HepG2 (cell line): ENCODE measurements at regions of chr1 and their contacts with region 1.

Region 1: GRCh38 chr1:163535807-163536206 is 214.1 kb downstream of the NUF2 start:
- DNase-seq: no peak
- ATAC-seq: no peak
- H3K4me3 ChIP-seq: no peak overlapping the region
- H3K27ac ChIP-seq: no peak overlapping the region
- H3K4me1 ChIP-seq: 0 out of 2 replicates have a peak, but pooled peaks cover 5% of the 10 kb centered on the region
- H3K27me3 ChIP-seq: no peaks in the 10 kb centered on the region
- CTCF ChIP-seq: 0 out of 2 replicates have a peak, but pooled peaks have one; percentile 17
- EP300 ChIP-seq: no peak
- POLR2A ChIP-seq: no peak
- RAD21 ChIP-seq: no peak

Region 2: DNA sequence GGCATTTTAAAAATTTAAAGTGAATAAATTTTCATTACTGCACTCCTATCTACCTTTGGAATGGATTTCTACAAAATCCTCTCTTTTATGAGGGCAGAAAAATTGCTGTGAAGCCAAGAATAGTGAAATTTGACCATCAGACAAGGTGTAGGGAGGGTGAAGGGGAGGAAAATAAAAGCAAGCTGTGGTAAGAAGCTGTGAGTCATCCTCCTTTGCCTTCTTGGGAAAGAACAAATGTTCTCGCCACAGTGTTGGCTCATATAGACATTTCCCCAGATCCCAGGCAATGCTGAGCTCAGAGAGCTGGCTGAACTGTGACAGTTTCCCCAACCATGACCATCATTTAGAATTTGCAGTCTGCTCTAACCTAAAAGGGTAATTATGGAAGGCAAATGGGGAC is 1258.5 kb after region 1 on chr1:
- CTCF ChIA-PET with region 1: no interaction called
- POLR2A ChIA-PET with region 1: no interaction called
- in situ Hi-C with region 1: loop called (anchors 10 kb)
- intact Hi-C with region 1: no loop called
- DNase-seq: no peak
- ATAC-seq: no peak
- H3K4me3 ChIP-seq: no peak overlapping the region
- H3K27ac ChIP-seq: no peak overlapping the region
- H3K4me1 ChIP-seq: no peaks in the 10 kb centered on the region
- H3K27me3 ChIP-seq: no peaks in the 10 kb centered on the region
- CTCF ChIP-seq: no peak
- EP300 ChIP-seq: no peak
- POLR2A ChIP-seq: no peak
- RAD21 ChIP-seq: no peak